Ovary (tissue), 10 donors: ENCODE measurements at regions of chr6 and their contacts with region 1.

Region 1: DNA sequence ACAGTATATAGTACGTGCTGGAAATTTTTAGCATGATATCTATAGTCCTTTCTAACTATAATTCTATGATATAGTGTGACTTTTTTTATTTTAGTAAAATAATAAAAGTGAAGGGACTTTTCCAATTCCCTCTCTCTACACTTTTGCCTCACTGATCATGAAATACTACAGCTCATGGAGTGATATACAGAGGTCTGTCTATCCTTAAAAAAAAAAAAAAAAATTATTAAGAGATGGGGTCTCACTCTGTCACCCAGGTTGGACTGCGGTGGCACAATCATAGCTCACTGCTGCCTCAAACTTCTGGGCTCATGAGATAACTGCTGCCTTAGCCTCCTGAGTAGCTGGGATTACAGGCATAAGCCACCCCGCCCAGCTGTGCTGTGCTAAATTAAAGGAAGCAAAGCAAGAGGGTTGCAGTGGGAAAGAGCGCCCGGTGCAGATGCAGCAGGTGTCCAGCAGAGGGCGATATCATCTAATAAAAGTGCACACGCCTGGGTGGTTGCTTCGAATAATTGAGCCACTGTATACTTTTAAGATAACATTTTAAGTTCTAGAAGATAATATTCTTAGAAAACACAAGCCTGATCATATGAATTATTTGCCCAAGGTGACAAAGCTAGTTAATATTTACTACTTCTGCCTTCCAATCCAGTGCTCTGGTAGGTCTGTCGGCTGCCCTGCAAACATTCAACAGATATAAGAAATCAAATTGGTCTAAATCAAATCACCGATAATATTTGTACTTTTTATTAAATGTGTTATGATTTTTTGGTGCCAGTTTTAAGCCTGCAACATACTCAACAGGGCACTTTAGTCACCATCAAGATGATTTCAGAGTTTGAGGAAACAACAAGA is 94.9 kb upstream of the NT5E start:
- DNase-seq: peak; percentile 61 to 85 (median 82)
- H3K4me3 ChIP-seq: no peak overlapping the region
- H3K27ac ChIP-seq: no peak overlapping the region
- H3K4me1 ChIP-seq: no peaks in the 10 kb centered on the region
- H3K27me3 ChIP-seq: no peaks in the 10 kb centered on the region
- CTCF ChIP-seq: peak; percentile 85 to 90 (median 87)
- EP300 ChIP-seq: no peak
- POLR2A ChIP-seq: no peak

Region 2: DNA sequence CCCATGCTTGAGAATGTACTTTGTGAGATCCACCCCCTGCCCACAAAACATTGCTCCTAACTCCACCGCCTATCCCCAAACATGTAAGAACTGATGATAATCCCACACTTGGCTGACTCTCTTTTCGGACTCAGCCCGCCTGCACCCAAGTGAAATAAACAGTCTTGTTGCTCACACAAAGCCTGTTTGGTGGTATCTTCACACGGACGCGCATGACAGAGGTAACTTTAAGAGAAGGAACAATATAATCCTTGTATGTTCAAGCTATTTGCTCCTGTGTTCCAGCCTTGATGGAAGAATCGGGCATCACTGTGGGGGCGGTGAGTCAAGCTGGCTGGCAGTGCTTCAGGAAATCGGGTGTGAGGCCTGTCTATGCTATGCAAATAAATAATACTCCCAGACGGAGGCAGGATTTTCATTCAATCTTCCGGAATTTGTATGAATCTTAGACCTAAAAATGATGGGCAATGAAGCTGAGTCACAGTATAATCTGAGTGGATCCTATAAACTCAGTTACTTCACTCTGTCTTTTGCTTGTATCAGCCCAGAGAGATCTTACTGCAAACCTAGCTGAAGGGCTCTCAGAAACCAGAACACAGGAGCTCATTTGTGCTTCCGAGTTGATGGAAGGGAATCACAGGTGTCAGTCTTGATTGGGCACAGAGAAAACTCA is 49.6 kb after region 1 on chr6:
- intact Hi-C with region 1: no loop called
- DNase-seq: peak in 3 of 5 donors; percentile 29 to 47 (median 30)
- H3K4me3 ChIP-seq: no peak overlapping the region
- H3K27ac ChIP-seq: no peak overlapping the region
- H3K4me1 ChIP-seq: no peaks in the 10 kb centered on the region
- H3K27me3 ChIP-seq: no peaks in the 10 kb centered on the region
- CTCF ChIP-seq: no peak
- EP300 ChIP-seq: no peak
- POLR2A ChIP-seq: no peak

Region 3: DNA sequence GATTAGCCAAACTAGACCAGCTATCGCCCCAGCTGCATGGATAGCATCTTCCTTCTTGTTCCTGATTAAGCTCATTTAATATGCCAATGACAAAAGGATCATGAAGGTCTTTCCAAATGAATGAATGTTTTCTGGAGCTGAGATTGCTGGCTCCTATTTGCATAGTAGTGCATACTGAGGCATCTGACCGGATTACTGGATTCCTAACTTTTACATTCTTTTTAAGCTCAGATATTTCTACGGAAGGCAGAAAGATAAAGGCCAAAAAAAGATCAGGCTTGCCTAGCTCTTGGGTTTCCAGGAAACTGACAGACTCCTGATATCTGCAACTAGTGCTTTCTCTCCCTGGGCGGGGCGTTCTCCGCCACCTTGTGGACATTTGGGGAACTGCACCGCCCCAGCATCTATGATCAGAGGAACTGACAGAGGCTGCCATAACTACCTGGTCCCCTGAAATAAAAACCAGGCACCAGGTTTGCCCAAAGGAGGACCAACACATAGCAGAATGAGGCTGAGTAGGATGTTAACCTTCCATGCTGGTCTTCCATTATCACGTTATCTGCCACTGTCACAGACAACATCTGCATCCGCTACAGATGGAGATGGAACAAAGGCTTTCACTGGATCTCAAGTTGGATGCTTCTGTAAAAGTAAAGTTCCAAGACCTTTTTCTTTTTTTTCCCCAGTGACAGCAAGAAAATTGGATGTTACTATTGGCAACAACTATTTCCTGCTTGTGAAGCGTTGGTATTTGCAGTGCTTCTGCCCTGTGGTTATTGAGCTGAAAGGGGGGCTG is 128.1 kb after region 1 on chr6:
- intact Hi-C with region 1: loop called (anchors 2 to 5 kb)
- DNase-seq: peak; percentile 75 to 90 (median 89)
- H3K4me3 ChIP-seq: no peak overlapping the region
- H3K27ac ChIP-seq: peak overlapping the region in 1 of 2 donors; percentile 38
- H3K4me1 ChIP-seq: peaks cover 2% of the 10 kb centered on the region
- H3K27me3 ChIP-seq: no peaks in the 10 kb centered on the region
- CTCF ChIP-seq: peak; percentile 96 to 98 (median 98)
- EP300 ChIP-seq: no peak
- POLR2A ChIP-seq: no peak

Region 4: DNA sequence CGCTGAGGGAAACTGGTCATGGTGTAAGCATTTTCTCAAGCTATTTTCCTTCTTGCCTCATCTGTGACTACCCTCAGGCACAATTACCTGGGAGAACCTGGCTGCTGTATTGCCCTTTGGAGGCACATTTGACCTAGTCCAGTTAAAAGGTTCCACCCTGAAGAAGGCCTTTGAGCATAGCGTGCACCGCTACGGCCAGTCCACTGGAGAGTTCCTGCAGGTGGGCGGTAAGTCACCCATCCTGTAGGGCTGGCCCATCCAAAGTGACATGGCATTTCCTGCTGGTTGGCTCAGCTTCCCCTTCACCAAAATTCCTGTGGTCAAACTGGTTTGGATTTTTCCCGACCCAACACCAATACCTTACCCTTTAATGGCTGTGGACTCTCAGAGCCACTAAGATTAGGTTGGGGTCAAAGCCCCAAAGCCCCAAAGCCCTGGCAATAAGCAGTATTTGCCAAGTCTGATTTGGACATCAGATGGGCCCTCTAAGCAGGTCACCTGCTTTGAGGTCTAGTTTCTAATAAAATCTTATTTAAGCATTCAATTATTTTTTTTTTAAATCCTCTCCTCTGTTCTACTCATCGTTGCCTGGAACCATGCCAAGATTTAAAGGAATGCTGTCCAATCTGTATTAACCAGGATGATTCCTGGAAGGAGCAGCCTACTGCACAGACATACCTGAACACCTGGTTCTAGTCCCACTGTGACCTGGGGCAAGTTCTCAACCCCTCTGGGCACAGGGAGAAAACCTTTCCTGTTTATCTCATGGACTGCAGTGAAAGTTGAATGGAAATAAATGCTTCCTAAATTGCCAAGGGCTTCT is 135.7 kb after region 1 on chr6:
- intact Hi-C with region 1: loop called in 1 of 4 experiments (anchors 5 kb)
- DNase-seq: no peak
- H3K4me3 ChIP-seq: no peak overlapping the region
- H3K27ac ChIP-seq: no peak overlapping the region
- H3K4me1 ChIP-seq: no peaks in the 10 kb centered on the region
- H3K27me3 ChIP-seq: no peaks in the 10 kb centered on the region
- CTCF ChIP-seq: no peak
- EP300 ChIP-seq: no peak
- POLR2A ChIP-seq: no peak